Breast epithelium (tissue), 4 donors: ENCODE measurements at regions of chr1 and their contacts with region 1.

Region 1: DNA sequence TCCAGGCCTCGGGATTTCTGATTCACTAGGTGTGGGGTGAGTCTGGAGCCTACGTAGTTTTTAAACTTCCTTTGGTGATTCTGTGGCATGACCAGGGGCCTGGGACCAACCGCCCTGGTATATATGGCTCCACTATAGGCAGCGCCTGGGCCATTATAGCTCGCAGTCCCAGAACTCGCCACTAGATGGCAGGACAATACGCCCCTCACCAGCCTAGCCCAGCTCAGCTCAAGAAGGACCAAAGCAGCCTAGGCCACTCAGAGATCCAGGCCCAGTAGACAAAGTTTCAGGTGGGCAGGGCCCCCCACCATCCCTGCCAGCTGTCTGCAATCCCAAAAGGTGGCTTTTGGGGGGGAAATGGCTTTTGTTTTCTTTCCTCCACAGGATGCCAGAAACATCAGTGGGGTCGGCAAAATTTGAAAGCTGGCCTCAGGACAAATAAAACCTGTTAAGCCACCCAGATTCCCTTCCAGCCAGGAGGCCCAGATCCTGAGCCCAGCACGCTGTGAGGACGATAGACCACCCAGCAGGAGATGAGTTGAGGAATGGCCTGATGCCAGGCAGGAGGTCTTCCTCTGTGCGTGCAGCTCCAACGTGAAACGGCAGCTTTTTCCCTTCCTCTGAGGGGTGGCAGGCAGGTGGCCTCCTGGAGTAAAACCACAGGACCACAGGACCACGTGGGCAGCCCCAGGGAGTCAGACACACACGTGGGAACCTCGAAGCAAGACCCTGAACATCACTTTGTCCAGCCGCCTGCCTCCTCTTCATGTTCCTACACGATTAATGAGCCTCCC is 24.8 kb upstream of the TMEM51 start:
- DNase-seq: peak; percentile 59 to 72
- H3K4me3 ChIP-seq: no peak overlapping the region
- H3K27ac ChIP-seq: no peak overlapping the region
- H3K4me1 ChIP-seq: no peaks in the 10 kb centered on the region
- H3K27me3 ChIP-seq: no peaks in the 10 kb centered on the region
- CTCF ChIP-seq: peak; percentile 75 to 89 (median 85)
- POLR2A ChIP-seq: no peak

Region 2: DNA sequence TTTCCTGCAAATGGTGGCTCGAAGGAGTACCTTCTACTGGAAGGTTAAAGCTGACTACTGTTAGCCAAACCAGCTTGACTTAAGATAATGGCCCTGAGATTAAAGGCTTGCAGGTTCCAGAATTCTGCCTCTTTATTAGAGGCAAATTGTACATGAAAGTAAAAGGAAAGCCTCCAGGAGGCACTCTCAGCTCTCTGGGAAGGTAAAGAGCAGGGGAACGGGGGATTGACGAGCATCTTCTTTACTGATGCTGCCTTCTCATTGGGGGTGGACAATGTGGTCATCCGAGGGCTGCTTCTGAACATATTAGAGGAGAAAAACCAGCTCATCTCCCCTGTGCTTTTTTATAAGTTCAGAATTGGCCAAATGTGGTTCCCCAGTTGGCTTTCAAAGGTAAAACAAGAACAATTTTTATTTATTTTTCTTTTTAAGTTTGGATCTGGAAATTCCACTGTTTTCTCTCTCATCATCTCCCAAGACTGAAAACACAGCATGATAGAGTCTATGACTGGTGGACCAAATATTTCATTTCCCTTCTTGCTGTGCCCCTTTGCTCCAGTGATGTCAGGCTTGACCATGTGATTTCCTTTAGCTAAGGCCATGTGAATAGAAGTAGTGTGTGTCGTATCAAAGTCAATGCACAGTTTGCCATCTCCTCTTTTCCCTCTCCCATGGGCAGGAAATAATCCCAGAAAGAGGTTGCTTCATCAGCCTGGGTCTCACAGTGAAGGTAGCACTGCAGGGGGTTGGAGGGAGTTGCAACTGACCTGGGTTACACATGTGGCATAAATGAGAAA is 1136.0 kb before region 1 on chr1:
- intact Hi-C with region 1: no loop called
- DNase-seq: no peak
- H3K4me3 ChIP-seq: no peak overlapping the region
- H3K27ac ChIP-seq: no peak overlapping the region
- H3K4me1 ChIP-seq: no peaks in the 10 kb centered on the region
- H3K27me3 ChIP-seq: no peaks in the 10 kb centered on the region
- CTCF ChIP-seq: no peak
- POLR2A ChIP-seq: no peak

Region 3: DNA sequence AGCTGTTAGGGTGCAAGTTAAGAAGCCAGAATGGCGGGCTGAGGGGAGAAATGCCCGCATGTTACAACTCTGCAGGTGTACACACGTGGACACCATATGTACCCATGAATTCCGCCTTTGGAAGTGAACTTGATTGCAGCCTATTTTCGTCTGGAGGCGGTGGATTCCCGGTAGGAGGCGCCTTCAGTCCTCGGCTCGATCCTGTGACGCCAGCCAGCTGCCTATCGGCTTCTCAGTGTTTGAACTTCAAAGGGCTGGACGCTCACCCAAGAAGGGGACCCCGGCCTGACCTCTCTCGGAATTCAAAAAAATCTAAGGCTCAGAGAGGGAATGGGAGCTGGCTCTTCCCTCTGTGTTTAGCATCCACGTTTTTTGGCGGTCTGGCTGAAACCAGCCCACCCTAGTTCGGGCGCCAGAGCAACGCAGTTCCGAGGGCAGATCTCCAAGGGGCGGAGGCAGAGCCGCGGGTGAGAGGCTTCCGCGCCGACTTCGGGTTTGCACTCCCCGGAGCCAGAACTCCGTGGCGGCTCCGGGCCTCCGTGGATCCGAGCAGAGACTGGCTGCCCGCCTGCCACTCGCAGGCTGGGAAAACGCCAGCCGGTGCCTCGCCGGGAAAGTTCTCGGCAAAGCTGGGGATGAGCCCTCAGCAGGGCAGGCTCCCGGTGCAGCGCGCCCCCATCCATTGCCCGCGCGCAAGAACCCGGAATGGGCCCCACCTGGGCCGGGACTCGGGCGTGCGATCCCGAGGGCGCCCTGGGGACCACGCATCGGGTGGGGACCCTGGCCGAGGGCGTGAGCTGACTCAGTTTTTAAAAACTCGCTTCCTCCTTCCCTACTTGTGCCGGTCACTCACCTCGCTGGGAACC is 23.8 kb after region 1 on chr1:
- intact Hi-C with region 1: loop called (anchors 2 kb)
- DNase-seq: peak; percentile 84 to 86
- H3K4me3 ChIP-seq: peak overlapping the region; percentile 57 to 96 (median 85)
- H3K27ac ChIP-seq: peak overlapping the region; percentile 91 to 93
- H3K4me1 ChIP-seq: no peaks in the 10 kb centered on the region
- H3K27me3 ChIP-seq: no peaks in the 10 kb centered on the region
- CTCF ChIP-seq: peak in 2 of 3 donors; percentile 45 to 65
- POLR2A ChIP-seq: peak; percentile 22

Region 4: GRCh38 chr1:15283526-15283925 is 154.8 kb after region 1 on chr1:
- intact Hi-C with region 1: loop called (anchors 10 kb)
- DNase-seq: peak in 1 of 2 donors; percentile 74
- H3K4me3 ChIP-seq: no peak overlapping the region
- H3K27ac ChIP-seq: peak overlapping the region; percentile 39 to 74
- H3K4me1 ChIP-seq: no peaks in the 10 kb centered on the region
- H3K27me3 ChIP-seq: no peaks in the 10 kb centered on the region
- CTCF ChIP-seq: peak in 1 of 3 donors; percentile 51
- POLR2A ChIP-seq: no peak